ENCODE measurements at regions of chr5 and their contacts with region 1.

Region 1: GRCh38 chr5:134370871-134371833 is at the start of gene UBE2B:
- DNase-seq: peak; percentile 100
- H3K4me3 ChIP-seq: peak within 1 kb of the TSS; percentile 80
- H3K27ac ChIP-seq: peak within 1 kb of the TSS; percentile 62
- H3K4me1 ChIP-seq: peaks cover 25% of the 10 kb centered on the region
- CTCF ChIP-seq: no peak
- total RNA-seq, gene UBE2B: 7.6 and 26.4 TPM in 2 replicates

Region 2: GRCh38 chr5:134176511-134177368 is 194.4 kb before region 1 on chr5 and contains the start of gene SKP1:
- CTCF ChIA-PET with region 1: no interaction called
- POLR2A ChIA-PET with region 1: interaction called, 4 read pairs
- intact Hi-C with region 1: loop called (anchors 2 kb)
- DNase-seq: peak; percentile 89
- H3K4me3 ChIP-seq: peak within 1 kb of the TSS; percentile 89
- H3K27ac ChIP-seq: peak within 1 kb of the TSS; percentile 75
- H3K4me1 ChIP-seq: peaks cover 23% of the 10 kb centered on the region
- CTCF ChIP-seq: no peak
- total RNA-seq, gene SKP1: 129 and 142 TPM in 2 replicates

Region 3: DNA sequence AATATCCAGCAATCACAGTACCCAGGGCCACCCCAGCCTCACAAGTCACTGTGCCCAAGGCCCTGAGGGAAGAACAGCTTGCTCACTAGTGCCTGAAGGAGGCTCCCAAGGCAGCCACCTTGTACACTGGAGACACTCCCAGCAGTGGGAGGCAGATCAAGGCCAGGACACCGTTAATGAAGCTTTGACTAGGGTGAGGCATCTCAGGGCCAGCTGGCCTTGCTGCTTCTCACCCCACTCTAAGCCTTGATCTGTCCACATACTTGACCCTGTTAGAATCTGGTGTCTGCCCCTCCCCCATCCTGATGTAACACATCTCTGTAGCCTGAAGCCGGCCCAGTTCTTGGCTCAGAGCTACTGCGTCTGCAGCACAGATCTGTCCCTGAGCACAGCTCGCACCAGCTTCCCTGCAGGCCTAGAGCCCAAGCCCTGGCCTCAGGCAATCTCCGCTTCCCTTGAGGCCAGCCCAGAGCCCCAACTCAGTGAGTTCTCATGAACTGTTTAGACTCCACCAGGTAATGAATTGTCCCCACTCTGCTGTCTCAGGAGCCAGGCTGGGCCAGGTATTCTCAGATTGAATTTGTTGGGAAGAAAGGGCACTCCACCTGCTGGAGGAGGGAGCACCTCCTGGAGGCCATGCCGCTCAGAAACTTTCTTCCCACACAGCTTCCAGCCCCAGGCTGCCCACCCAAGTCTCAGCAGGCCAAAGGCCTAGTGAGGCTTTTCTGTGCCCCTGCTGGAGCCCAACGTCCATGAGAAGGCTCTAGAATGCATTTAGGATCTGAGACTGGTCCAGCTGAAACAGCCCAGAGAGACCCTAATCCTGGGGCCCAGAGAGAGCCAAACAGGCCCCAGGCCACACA is 140.9 kb after region 1 on chr5:
- CTCF ChIA-PET with region 1: no interaction called
- POLR2A ChIA-PET with region 1: no interaction called
- intact Hi-C with region 1: no loop called
- DNase-seq: no peak
- H3K4me3 ChIP-seq: no peak overlapping the region
- H3K27ac ChIP-seq: no peak overlapping the region
- H3K4me1 ChIP-seq: no peaks in the 10 kb centered on the region
- CTCF ChIP-seq: no peak

Region 4: GRCh38 chr5:134637161-134637582 is 266.0 kb after region 1 on chr5:
- CTCF ChIA-PET with region 1: no interaction called
- POLR2A ChIA-PET with region 1: no interaction called
- intact Hi-C with region 1: loop called (anchors 1 kb)
- DNase-seq: no peak
- H3K4me3 ChIP-seq: no peak overlapping the region
- H3K27ac ChIP-seq: no peak overlapping the region
- H3K4me1 ChIP-seq: no peaks in the 10 kb centered on the region
- CTCF ChIP-seq: no peak